ENCODE measurements at regions of chr16 and their contacts with region 1.

Region 1: GRCh38 chr16:57091975-57092785 is at the start of gene CPNE2:
- DNase-seq: peak; percentile 32
- ATAC-seq: peak; percentile 67
- H3K4me3 Mint-ChIP-seq: peak within 1 kb of the TSS; percentile 62
- H3K27ac Mint-ChIP-seq: no peak within 1 kb of the TSS
- H3K4me1 Mint-ChIP-seq: peaks cover 5% of the 10 kb centered on the region
- H3K27me3 Mint-ChIP-seq: peaks cover 37% of the 10 kb centered on the region
- total RNA-seq, gene CPNE2: 11.3 to 12.5 TPM

Region 2: GRCh38 chr16:57128771-57129389 is 36.7 kb after region 1 on chr16:
- CTCF ChIA-PET with region 1: interaction called, 21 read pairs
- POLR2A ChIA-PET with region 1: interaction called, 3 read pairs
- DNase-seq: peak; percentile 83
- ATAC-seq: peak; percentile 75
- H3K4me3 Mint-ChIP-seq: peak overlapping the region; percentile 71
- H3K27ac Mint-ChIP-seq: peak overlapping the region; percentile 96
- H3K4me1 Mint-ChIP-seq: peaks cover 86% of the 10 kb centered on the region
- H3K27me3 Mint-ChIP-seq: no peaks in the 10 kb centered on the region

Region 3: DNA sequence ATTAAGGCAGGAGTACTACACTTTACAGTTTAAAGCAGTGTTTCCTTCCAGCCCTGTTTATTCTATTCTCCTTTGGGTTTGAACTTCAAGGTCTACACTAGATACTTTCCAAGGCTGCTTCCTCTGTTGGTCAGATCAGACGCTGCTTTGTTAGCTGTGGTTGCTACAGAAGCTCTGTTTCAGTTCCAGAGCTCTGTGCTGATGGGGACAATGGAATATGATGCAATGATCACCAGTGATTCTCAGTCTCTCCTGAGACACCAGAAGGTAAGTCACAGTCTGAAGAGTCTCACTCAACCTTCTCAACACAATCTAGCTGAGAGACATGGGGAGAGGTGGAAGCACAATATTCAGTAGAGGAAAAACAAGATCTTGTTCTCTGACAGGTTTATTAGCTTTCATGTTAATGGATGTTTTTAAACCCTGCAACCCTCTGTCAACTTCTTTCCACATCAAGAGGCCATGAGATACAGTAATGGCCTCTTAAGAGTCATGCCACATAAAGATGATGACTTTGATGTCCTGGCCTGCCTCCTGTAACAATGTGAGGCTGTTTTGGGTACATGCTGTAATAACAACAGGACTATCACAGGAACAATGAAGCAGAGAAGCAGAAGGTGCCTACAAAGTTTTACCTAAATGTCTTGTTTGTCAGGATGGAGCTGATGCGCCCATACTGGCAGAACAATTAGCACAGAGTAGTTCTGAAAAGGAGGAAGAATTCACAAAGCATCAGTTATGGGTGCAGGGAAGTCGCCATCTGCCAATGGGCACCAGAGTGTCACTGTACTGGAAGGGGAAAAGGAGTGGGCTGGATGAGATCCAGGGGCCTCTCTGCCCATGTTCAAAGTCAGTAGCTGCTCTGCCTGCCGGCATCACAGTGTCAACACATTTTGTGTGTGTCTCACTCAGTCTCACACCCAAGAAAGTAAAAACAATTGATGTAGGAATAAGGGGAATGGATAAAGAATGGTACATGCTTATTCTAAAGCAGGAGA is 60.2 kb after region 1 on chr16:
- CTCF ChIA-PET with region 1: interaction called, 16 read pairs
- POLR2A ChIA-PET with region 1: interaction called, 3 read pairs
- DNase-seq: no peak
- ATAC-seq: peak; percentile 65
- H3K4me3 Mint-ChIP-seq: no peak overlapping the region
- H3K27ac Mint-ChIP-seq: peak overlapping the region; percentile 71
- H3K4me1 Mint-ChIP-seq: peaks cover 27% of the 10 kb centered on the region
- H3K27me3 Mint-ChIP-seq: no peaks in the 10 kb centered on the region

Region 4: GRCh38 chr16:57167953-57168352 is 75.8 kb after region 1 on chr16:
- CTCF ChIA-PET with region 1: interaction called, 12 read pairs
- POLR2A ChIA-PET with region 1: no interaction called
- DNase-seq: peak; percentile 41
- ATAC-seq: peak; percentile 87
- H3K4me3 Mint-ChIP-seq: no peak overlapping the region
- H3K27ac Mint-ChIP-seq: no peak overlapping the region
- H3K4me1 Mint-ChIP-seq: peaks cover 5% of the 10 kb centered on the region
- H3K27me3 Mint-ChIP-seq: no peaks in the 10 kb centered on the region

Region 5: DNA sequence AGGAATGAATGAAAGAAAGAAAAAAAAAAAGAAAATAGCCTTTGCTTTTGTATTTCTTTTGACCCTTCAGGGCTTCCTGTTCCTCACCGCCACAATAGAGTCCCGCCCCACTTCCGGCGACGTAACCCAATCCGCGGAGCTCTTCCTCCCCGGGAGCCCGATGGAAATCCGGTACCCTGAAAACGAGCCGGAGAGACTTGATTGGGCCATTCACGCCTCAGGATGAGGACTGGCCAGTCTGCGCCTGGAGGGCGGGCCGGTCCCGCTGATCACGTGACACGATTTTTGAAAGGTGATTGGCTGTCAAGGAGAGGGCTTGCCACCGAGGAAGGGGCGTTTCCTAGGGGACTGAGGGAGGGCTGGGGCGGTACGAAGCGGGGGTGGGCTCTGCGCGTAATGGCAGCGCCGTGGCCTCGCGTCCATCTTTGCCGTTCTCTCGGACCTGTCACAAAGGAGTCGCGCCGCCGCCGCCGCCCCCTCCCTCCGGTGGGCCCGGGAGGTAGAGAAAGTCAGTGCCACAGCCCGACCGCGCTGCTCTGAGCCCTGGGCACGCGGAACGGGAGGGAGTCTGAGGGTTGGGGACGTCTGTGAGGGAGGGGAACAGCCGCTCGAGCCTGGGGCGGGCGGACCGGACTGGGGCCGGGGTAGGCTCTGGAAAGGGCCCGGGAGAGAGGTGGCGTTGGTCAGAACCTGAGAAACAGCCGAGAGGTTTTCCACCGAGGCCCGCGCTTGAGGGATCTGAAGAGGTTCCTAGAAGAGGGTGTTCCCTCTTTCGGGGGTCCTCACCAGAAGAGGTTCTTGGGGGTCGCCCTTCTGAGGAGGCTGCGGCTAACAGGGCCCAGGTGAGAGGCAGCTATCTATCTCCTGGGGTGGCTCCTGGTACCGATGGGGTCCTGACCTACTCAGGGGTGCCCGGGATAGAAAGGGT is 94.0 kb after region 1 on chr16 and contains the starts of genes PSME3IP1 and RSPRY1:
- CTCF ChIA-PET with region 1: interaction called, 10 read pairs
- POLR2A ChIA-PET with region 1: interaction called, 5 read pairs
- DNase-seq: peak; percentile 100
- ATAC-seq: peak; percentile 95
- H3K4me3 Mint-ChIP-seq: peak within 1 kb of the TSS; percentile 94
- H3K27ac Mint-ChIP-seq: peak within 1 kb of the TSS; percentile 97
- H3K4me1 Mint-ChIP-seq: peaks cover 39% of the 10 kb centered on the region
- H3K27me3 Mint-ChIP-seq: no peaks in the 10 kb centered on the region
- total RNA-seq, gene PSME3IP1: 106 to 113 TPM
- total RNA-seq, gene RSPRY1: 30.9 to 35.8 TPM

Region 6: DNA sequence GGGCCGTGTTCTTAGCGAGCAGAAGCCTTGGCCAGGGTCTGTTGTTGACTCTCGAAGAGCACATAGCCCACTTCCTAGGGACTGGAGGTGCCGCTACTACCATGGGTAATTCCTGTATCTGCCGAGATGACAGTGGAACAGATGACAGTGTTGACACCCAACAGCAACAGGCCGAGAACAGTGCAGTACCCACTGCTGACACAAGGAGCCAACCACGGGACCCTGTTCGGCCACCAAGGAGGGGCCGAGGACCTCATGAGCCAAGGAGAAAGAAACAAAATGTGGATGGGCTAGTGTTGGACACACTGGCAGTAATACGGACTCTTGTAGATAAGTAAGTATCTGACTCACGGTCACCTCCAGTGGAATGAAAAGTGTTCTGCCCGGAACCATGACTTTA is 112.5 kb after region 1 on chr16:
- CTCF ChIA-PET with region 1: no interaction called
- POLR2A ChIA-PET with region 1: no interaction called
- DNase-seq: no peak
- ATAC-seq: no peak
- H3K4me3 Mint-ChIP-seq: no peak overlapping the region
- H3K27ac Mint-ChIP-seq: no peak overlapping the region
- H3K4me1 Mint-ChIP-seq: peaks cover 2% of the 10 kb centered on the region
- H3K27me3 Mint-ChIP-seq: no peaks in the 10 kb centered on the region

Measured in activated CD8-positive, alpha-beta T cell treated with anti-CD3 and anti-CD28 coated beads, Interleukin-2, amount 10 ng/mL, durations not matched to agents 7 days and 5 days (primary cell).